Aorta (tissue), 5 donors: ENCODE measurements at regions of chr9 and their contacts with region 1.

Region 1: GRCh38 chr9:95004411-95005277 is 278.1 kb downstream of the AOPEP start:
- DNase-seq: peak; percentile 47 to 86
- ATAC-seq: peak; percentile 42
- H3K4me3 ChIP-seq: peak overlapping the region; percentile 92 to 100
- H3K27ac ChIP-seq: peak overlapping the region; percentile 100
- H3K4me1 ChIP-seq: peaks cover 0 to 4% of the 10 kb centered on the region in 2 donors
- H3K27me3 ChIP-seq: no peaks in the 10 kb centered on the region

Region 2: DNA sequence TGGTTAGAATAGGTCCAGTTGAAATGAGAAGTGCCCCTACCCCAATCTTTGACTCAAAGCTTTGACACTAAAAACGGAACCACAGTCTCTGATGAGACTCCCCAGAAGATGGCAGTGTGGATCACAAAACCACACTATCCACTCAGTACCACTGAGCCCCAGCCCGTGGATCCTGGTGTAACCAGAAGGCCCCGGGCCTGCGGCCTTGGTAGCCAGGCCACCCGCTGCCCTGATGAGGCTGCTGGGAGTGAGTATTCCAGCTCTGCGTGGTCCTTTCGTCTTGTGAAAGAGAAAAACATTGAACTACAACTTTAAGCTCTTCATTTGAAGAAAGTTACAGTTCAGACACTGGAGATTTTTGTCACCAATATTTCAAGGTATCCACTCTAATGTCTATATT is 323.1 kb before region 1 on chr9:
- intact Hi-C with region 1: loop called in 1 of 2 experiments (anchors 5 kb)
- DNase-seq: peak; percentile 86 to 90
- ATAC-seq: peak; percentile 95
- H3K4me3 ChIP-seq: no peak overlapping the region
- H3K27ac ChIP-seq: peak overlapping the region in 1 of 2 donors; percentile 68
- H3K4me1 ChIP-seq: no peaks in the 10 kb centered on the region
- H3K27me3 ChIP-seq: no peaks in the 10 kb centered on the region

Region 3: DNA sequence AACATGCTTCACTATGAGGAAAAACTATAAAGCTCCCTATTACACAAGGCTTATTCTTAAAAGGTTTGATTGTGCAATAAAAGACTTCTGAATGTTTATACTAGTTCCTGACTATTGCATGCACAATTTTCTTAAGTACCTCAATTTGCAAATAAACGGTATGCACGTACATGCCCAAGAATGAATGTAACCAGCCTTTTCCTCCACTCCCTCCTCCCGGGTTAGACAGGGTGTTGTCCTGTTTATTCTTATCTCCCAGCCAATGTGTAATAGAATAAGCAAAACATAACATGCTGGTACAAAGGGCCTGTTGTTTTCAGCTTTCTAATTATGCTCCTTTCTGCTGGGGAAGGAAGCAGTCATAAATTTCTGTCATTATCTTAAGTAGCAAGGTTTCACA is 199.1 kb before region 1 on chr9:
- intact Hi-C with region 1: loop called (anchors 2 to 5 kb)
- DNase-seq: no peak
- ATAC-seq: peak; percentile 34
- H3K4me3 ChIP-seq: no peak overlapping the region
- H3K27ac ChIP-seq: peak overlapping the region in 1 of 2 donors; percentile 64
- H3K4me1 ChIP-seq: peaks cover 6 to 15% of the 10 kb centered on the region in 2 donors
- H3K27me3 ChIP-seq: no peaks in the 10 kb centered on the region

Region 4: DNA sequence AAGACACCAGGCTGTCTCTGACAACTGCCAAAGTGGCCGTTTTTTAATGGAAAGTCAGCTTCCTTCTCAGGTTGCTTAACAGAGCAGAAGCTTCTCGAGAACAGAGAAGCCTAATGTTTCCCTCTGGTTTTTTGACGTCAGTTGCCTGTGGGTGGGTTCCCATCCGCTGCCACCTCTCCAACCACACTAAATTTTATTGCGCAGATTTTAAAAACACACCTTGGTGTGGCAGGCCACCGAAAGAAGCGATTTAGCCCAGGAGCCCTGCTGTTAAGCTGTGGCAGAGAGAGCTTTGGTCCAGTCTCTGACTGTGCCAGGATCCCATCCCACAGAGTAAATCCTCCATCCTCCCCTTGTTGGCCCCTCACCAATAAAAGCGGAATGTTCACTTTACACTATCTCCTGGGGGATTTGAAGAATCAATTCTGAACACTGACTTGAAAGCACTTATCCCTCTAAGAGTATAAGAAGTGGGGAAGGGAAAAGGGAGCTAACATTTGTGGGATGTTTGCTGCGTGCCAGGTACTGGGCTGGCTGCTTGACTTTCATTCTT is 96.6 kb before region 1 on chr9:
- intact Hi-C with region 1: loop called in 1 of 2 experiments (anchors 5 kb)
- DNase-seq: no peak
- ATAC-seq: peak; percentile 64
- H3K4me3 ChIP-seq: no peak overlapping the region
- H3K27ac ChIP-seq: peak overlapping the region; percentile 94 to 98
- H3K4me1 ChIP-seq: peaks cover 3 to 11% of the 10 kb centered on the region in 2 donors
- H3K27me3 ChIP-seq: no peaks in the 10 kb centered on the region

Region 5: DNA sequence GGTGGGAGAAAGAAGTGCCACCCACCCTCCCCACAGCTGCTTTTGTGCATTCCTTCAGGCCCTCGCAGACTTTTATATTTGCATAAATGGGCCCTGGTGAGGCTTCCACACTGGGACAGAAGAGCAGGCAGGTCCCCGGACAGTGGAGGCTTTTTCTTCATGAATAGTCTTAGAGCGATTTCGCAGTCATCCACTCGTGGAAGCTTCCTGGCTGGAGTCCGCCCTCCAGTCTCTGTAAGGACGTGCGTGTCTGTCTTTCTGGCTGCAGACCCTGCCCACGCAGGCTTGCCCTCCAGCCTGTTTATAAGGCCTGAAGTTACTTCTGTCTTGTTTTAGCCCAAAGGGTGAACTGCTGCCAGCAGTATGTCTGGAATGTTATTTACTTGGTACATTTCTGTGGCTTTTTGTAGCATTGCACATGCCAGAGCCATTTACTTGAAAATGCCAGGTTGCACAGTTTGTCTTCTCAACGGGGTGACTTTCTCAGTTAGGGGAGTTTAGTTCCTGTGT is 82.5 kb before region 1 on chr9:
- intact Hi-C with region 1: loop called (anchors 2 to 5 kb)
- DNase-seq: peak; percentile 87
- ATAC-seq: peak; percentile 53
- H3K4me3 ChIP-seq: no peak overlapping the region
- H3K27ac ChIP-seq: peak overlapping the region; percentile 100
- H3K4me1 ChIP-seq: peaks cover 13% of the 10 kb centered on the region in 2 donors
- H3K27me3 ChIP-seq: no peaks in the 10 kb centered on the region

Region 6: GRCh38 chr9:95048225-95049087 is 43.8 kb after region 1 on chr9:
- intact Hi-C with region 1: loop called in 1 of 2 experiments (anchors 5 kb)
- DNase-seq: peak; percentile 63 to 84
- ATAC-seq: peak; percentile 87
- H3K4me3 ChIP-seq: peak overlapping the region; percentile 65 to 89
- H3K27ac ChIP-seq: peak overlapping the region; percentile 89 to 95
- H3K4me1 ChIP-seq: peaks cover 0 to 3% of the 10 kb centered on the region in 2 donors
- H3K27me3 ChIP-seq: no peaks in the 10 kb centered on the region

Region 7: DNA sequence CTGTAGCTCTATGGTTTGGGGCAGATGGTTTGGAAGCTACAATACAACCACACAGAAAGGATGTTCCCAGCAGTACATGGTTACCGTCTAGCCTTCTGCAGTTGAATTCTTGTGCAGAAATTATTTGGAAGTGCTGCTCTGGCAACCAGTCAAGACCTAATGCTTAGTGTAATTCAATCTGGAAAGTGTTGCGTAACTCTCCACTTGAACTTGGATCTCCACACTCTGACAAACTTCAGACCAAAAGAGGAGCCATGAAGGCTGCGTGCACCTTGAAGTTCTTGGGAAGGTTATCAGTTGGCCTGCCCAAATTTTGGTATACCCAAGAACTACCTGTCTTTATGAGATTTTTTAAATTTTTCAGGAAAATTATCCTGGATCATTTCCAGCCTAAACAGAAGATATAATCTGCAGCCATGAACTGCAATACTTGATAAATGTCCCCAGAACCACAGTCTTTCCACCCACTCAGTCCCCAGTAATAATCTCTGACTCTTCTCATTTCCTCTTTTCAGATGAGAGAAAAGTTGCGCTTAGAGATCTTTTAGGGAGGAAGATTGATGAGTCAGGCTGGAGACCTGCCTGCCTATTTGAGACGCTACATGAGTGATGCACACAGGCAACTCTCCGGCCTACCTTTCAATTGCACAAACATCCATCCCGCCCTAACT is 153.0 kb after region 1 on chr9:
- intact Hi-C with region 1: no loop called
- DNase-seq: no peak
- ATAC-seq: peak; percentile 90
- H3K4me3 ChIP-seq: peak overlapping the region in 1 of 2 donors; percentile 41
- H3K27ac ChIP-seq: no peak overlapping the region
- H3K4me1 ChIP-seq: peaks cover 0 to 4% of the 10 kb centered on the region in 2 donors
- H3K27me3 ChIP-seq: no peaks in the 10 kb centered on the region